ENCODE measurements at regions of chr17 and their contacts with region 1.

Region 1: DNA sequence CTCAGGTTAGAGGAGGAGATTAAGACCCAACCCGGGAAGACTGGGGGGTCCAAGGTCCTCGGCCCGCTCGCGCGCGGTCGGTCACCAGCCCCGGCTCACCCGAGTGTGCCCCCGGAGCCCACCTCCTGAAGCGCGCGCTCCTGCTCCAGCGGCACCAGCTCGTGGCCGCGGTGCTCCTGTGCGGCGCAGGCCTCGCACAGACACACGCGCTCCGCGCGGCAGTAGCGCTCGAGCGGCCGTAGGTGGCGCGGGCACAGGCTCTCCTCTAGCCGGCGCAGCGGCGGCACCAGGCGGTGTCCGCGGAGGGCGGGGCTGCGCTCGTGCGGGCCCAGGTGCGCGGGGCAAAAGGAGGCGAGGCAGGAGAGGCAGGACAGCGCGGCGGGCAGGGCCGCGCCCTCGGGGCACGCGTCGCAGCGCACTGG is 618 bp downstream of the TRIM47 start:
- DNase-seq: peak in 7 of 10 donors; percentile 58 to 82 (median 71)
- H3K4me3 ChIP-seq: peak overlapping the region; percentile 49 to 82 (median 71)
- H3K27ac ChIP-seq: peak overlapping the region; percentile 62 to 99 (median 94)
- H3K27me3 ChIP-seq: no peaks in the 10 kb centered on the region
- CTCF ChIP-seq: peak in 27 of 56 donors; percentile 1 to 52 (median 26)

Region 2: DNA sequence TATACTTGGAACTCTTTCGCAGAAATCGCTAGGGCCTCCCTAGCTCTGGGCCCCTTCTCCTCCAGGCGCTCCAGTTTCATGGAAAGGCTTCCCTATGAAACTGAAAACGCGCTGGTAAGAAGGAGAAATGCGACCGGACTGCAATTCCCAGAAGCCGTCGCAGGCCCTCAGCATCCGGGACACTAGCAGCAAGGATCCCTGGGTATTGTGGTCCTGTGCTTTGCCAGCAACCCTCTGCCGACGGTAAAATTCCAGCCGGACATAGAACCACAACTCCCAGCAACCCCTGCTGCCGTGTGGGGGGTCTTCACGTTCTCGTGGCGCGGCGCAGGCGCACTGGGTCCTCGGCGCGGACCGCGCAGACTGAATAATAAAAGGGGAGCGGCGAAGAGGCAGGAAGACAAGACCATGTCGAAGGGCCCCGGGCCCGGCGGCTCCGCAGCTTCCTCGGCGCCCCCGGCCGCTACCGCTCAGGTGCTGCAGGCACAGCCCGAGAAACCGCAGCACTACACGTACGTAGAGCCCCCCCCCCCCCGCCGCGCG is 93.2 kb before region 1 on chr17 and contains the start of gene UNK:
- intact Hi-C with region 1: loop called in 1 of 2 experiments (anchors 5 kb)
- DNase-seq: peak; percentile 97 to 99 (median 98)
- H3K4me3 ChIP-seq: peak within 1 kb of the TSS; percentile 55 to 94 (median 77)
- H3K27ac ChIP-seq: peak within 1 kb of the TSS; percentile 95 to 100 (median 100)
- H3K27me3 ChIP-seq: no peaks in the 10 kb centered on the region
- CTCF ChIP-seq: peak in 31 of 56 donors; percentile 2 to 44 (median 22)
- total RNA-seq, gene UNK: 20.6 to 51.6 (median 29.4) TPM

Region 3: GRCh38 chr17:75927286-75927922 is 49.6 kb after region 1 on chr17:
- intact Hi-C with region 1: no loop called
- DNase-seq: no peak
- H3K4me3 ChIP-seq: no peak overlapping the region
- H3K27ac ChIP-seq: no peak overlapping the region
- H3K27me3 ChIP-seq: no peaks in the 10 kb centered on the region
- CTCF ChIP-seq: peak in 18 of 56 donors; percentile 6 to 43 (median 17)

Region 4: GRCh38 chr17:76032073-76032779 is 154.5 kb after region 1 on chr17:
- intact Hi-C with region 1: no loop called
- DNase-seq: no peak
- H3K4me3 ChIP-seq: no peak overlapping the region
- H3K27ac ChIP-seq: no peak overlapping the region
- H3K27me3 ChIP-seq: no peaks in the 10 kb centered on the region
- CTCF ChIP-seq: peak in 8 of 56 donors; percentile 9 to 21 (median 16)